ENCODE measurements at regions of chr18 and their contacts with region 1.

Region 1: DNA sequence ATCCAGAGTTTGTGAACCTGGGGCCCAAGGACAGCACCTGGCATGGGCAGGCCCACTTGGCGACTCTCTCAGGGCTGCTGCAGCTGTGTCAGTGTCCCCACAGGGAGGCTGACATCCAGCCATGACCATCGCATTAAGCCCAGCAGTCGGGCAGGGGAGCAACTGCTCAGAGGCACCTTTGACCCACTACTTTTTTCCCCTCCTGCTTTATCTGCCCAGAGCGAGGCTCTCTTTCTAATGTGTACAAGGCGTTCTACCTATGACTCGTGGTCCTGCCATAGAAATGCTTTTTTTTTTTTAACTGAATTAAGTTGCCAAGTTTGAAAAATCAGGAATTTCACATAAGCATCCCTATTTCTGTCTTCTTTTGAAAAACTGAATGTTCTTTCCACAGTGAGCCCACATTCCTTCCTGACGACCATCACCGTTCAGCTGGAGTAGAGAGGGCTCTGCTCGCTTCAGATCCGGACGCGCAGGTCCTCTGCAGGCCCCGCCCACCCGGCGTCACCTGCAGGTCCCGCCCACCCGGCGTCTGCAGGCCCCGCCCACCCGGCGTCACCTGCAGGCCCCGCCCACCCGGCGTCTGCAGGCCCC is 403 bp upstream of the CLUL1 start:
- DNase-seq: peak; percentile 6
- ATAC-seq: peak; percentile 76
- H3K4me3 Mint-ChIP-seq: no peak overlapping the region
- H3K27ac Mint-ChIP-seq: no peak overlapping the region
- H3K4me1 Mint-ChIP-seq: peaks cover 8% of the 10 kb centered on the region
- H3K27me3 Mint-ChIP-seq: peaks cover 20% of the 10 kb centered on the region

Region 2: GRCh38 chr18:158128-159036 is 438.0 kb before region 1 on chr18 and contains the start of gene USP14:
- CTCF ChIA-PET with region 1: no interaction called
- POLR2A ChIA-PET with region 1: no interaction called
- intact Hi-C with region 1: loop called in 1 of 2 experiments (anchors 1 kb)
- DNase-seq: peak; percentile 99
- ATAC-seq: peak; percentile 97
- H3K4me3 Mint-ChIP-seq: peak within 1 kb of the TSS; percentile 89
- H3K27ac Mint-ChIP-seq: peak within 1 kb of the TSS; percentile 87
- H3K4me1 Mint-ChIP-seq: peaks cover 31% of the 10 kb centered on the region
- H3K27me3 Mint-ChIP-seq: no peaks in the 10 kb centered on the region
- total RNA-seq, gene USP14: 94.7 to 101 TPM

Region 3: GRCh38 chr18:616380-616995 is 20.1 kb after region 1 on chr18:
- CTCF ChIA-PET with region 1: interaction called, 8 read pairs
- POLR2A ChIA-PET with region 1: no interaction called
- intact Hi-C with region 1: loop called in 1 of 2 experiments (anchors 2 kb)
- DNase-seq: no peak
- ATAC-seq: no peak
- H3K4me3 Mint-ChIP-seq: no peak overlapping the region
- H3K27ac Mint-ChIP-seq: no peak overlapping the region
- H3K4me1 Mint-ChIP-seq: no peaks in the 10 kb centered on the region
- H3K27me3 Mint-ChIP-seq: peaks cover 1% of the 10 kb centered on the region

Region 4: GRCh38 chr18:658001-658946 is 61.9 kb after region 1 on chr18:
- CTCF ChIA-PET with region 1: interaction called, 3 read pairs
- POLR2A ChIA-PET with region 1: no interaction called
- intact Hi-C with region 1: loop called in 1 of 2 experiments (anchors 1 kb)
- DNase-seq: peak; percentile 85
- ATAC-seq: peak; percentile 65
- H3K4me3 Mint-ChIP-seq: peak overlapping the region; percentile 93
- H3K27ac Mint-ChIP-seq: peak overlapping the region; percentile 90
- H3K4me1 Mint-ChIP-seq: peaks cover 12% of the 10 kb centered on the region
- H3K27me3 Mint-ChIP-seq: peaks cover 20% of the 10 kb centered on the region

Region 5: DNA sequence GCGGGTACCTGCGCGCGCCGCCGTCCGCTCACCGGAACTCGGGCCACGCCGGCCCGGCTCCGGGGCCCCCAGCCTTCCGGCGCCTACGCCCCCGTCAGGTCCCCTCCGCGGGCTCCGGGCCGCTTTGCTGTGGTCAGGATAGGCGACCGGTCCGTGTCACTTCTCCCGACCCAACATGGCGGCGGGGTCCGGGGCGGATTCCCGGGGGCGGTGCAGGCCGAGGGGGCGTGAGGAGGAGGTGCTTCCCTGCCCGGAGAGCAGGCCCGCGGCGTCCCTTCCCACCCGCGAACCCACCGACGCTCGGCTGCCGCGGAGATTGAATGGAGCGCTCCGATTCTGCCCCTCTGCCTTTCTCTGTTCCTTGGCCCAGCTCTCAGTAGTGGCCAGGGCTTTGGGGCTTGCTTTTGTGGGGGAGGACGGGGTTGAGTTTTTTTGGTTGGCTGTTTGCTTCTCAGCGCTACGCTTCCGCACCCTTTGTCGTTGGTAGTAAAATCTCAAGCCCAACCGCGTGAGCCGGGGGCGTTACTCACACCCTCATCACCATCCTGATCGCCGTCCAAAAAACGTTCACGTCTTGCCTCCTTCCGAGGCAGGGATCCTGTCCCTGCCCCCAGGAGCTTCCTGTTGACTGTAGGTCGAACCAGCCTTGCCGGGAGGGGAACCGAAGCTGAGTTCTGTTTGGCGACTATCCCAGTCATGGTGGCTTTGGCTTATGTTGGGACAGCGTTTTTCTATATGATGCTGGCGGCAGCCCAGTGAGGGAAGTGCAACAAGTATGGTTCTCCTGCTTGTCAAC is 216.2 kb after region 1 on chr18:
- CTCF ChIA-PET with region 1: no interaction called
- POLR2A ChIA-PET with region 1: no interaction called
- intact Hi-C with region 1: loop called in 1 of 2 experiments (anchors 1 kb)
- DNase-seq: peak; percentile 85
- ATAC-seq: peak; percentile 65
- H3K4me3 Mint-ChIP-seq: peak overlapping the region; percentile 87
- H3K27ac Mint-ChIP-seq: peak overlapping the region; percentile 99
- H3K4me1 Mint-ChIP-seq: peaks cover 58% of the 10 kb centered on the region
- H3K27me3 Mint-ChIP-seq: no peaks in the 10 kb centered on the region

Region 6: DNA sequence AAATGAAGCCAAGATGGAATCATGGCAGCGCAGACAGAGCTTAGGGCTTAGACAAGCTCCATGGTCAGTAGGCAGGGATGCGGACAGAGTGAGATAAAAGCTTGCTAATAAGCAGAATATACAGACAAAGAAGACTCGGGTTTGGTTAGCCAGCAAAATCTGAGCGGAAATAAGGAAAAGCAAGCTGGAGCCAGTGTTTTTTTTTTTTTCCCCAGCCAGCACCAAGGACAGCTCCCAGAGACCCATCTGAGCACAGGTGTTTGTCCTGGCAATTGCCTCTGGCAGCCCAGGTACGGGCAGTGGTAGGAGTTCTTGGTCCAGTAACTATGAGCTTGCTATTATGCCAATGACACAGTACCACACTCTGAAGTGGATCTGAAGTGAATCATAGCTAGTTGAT is 495.8 kb after region 1 on chr18:
- CTCF ChIA-PET with region 1: no interaction called
- POLR2A ChIA-PET with region 1: no interaction called
- intact Hi-C with region 1: no loop called
- DNase-seq: no peak
- ATAC-seq: no peak
- H3K4me3 Mint-ChIP-seq: no peak overlapping the region
- H3K27ac Mint-ChIP-seq: no peak overlapping the region
- H3K4me1 Mint-ChIP-seq: no peaks in the 10 kb centered on the region
- H3K27me3 Mint-ChIP-seq: no peaks in the 10 kb centered on the region

Measured in activated CD4-positive, alpha-beta T cell treated with anti-CD3 and anti-CD28 coated beads for 36 hours (primary cell).